ENCODE measurements at regions of chr2 and their contacts with region 1.

Region 1: GRCh38 chr2:27752551-27753237 is 18.8 kb upstream of the MRPL33 start:
- DNase-seq: no peak

Region 2: DNA sequence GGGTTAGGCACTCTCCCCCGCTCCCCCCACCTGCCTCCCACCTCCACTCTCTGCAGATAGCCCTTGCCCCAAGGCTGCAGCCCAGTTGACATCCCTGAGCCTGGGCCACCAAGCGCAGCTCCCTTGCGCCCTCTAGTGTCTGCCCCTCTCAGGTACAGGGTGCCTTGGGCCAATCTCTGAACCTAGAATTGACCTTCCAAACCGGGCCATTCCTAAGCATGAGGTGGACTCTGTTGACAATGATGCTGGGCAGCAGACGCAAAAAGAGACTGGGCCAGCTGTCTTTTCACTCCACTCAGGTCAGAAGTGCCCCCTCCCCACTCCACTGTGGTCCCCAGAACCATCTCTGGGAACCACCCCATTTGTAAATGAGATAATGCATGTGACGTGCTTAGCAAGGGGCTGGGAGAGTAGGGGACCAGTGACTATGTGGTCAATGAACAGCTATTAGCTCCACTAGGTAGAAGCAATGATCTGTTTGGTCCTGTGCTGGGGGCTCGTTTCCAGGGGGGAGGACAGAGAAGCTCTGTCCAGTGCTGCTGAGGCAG is 699.9 kb after region 1 on chr2:
- intact Hi-C with region 1: loop called (anchors 2 kb)
- DNase-seq: peak; percentile 92